ENCODE measurements at regions of chr3 and their contacts with region 1.

Region 1: DNA sequence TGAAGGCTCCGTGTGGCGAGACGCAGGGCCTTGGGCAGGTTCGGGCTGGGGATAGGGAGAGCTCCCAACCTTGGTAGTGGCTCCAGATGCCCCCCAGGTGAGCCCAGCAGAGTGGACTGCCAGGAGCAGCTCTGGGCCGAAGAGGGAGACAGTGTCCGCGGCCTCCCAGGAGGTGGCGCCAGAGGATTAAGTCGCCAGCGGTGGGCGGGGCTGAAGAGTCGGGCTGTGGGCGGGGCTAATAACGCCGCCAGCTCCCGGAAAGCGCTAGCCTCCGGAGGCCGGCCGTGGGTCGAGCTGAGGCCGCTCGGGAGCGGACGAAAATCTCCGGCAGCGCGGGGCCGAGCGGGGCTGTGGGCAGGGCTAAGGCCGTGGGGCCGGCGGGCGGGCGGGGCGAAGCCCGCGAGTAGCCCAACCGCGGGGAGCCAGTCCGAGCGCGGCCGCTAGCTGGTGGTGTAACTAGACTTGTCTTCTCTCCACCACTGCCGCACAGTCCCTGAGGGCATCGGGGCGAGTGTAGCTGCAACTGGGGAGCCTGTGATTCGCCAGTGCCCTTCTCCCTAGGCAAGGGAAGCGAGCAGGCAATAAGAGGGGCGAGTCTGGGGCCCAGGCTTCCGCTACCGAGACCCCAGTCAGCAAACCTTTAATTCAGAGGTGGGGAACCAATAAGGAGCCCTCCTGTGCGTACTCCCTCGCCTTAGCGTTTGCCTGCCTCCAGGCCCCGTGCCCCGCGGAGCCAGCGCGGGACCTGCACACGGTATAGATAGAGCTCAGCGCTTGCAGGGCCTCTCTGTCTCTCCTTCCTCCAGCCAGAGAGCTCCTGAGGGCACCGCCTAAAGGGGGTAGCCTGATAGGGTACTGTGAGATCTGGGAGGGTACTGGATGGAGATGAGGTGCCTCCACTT is 14.4 kb upstream of the BSN start:
- DNase-seq: peak; percentile 97
- ATAC-seq: peak; percentile 86
- H3K4me3 Mint-ChIP-seq: peak overlapping the region; percentile 72
- H3K27ac Mint-ChIP-seq: 0 out of 2 replicates have a peak overlapping the region, but pooled peaks have one; percentile 41
- H3K4me1 Mint-ChIP-seq: peaks cover 19% of the 10 kb centered on the region
- H3K27me3 Mint-ChIP-seq: peaks cover 23% of the 10 kb centered on the region
- CTCF ChIP-seq: peak; percentile 80

Region 2: GRCh38 chr3:49454458-49454857 is 85.5 kb before region 1 on chr3:
- CTCF ChIA-PET with region 1: interaction called, 62 read pairs
- POLR2A ChIA-PET with region 1: interaction called, 10 read pairs
- DNase-seq: peak; percentile 76
- ATAC-seq: peak; percentile 92
- H3K4me3 Mint-ChIP-seq: no peak overlapping the region
- H3K27ac Mint-ChIP-seq: no peak overlapping the region
- H3K4me1 Mint-ChIP-seq: peaks cover 25% of the 10 kb centered on the region
- H3K27me3 Mint-ChIP-seq: no peaks in the 10 kb centered on the region
- CTCF ChIP-seq: no peak

Region 3: DNA sequence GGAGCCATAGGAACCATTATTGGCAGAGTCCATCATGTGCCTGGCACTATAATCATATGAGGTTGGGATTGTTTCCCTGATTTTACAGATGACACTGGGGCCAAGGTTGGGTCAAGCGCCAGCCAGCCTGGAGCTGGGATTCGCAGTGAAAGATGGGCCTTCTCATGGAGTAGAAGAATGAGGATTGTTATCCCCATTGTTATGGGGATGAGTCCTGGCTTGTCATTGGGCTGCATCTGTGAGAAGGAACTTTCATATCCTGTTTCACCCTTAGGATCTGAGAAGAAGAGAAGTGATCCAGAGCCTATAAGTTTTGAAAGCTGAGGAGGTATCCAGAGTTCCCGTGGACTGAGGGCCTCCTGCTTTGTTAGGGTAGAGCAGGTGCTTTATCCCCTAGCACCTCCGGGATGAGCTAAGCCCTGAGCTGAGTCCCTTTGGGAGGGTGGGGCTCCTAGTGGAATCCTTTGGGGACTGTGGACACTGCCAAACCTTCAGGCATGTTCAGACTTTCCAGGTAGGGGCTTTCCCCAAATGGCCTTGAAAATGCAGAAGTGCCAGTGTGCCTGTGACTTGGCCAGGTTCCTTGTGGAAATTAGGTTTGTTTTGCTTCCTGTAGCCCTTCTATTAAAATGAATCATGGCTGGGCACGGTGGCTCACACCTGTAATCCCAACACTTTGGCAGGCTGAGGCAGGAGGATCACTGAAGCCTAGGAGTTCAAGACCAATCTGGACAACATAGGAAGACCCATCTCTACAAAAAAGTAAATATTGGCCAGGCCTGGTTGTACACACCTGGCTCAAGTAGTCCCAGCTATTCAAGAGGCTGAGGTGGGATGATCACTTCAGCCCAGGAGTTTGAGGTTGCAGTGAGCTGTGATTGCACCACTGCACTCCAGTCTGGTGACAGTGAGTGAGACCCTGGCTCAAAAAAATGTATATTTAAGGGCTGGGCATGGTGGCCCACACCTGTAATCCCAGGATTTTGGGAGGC is 15.9 kb before region 1 on chr3:
- CTCF ChIA-PET with region 1: interaction called, 14 read pairs
- POLR2A ChIA-PET with region 1: no interaction called
- DNase-seq: no peak
- ATAC-seq: no peak
- H3K4me3 Mint-ChIP-seq: no peak overlapping the region
- H3K27ac Mint-ChIP-seq: peak overlapping the region; percentile 85
- H3K4me1 Mint-ChIP-seq: 0 out of 2 replicates have a peak, but pooled peaks cover 6% of the 10 kb centered on the region
- H3K27me3 Mint-ChIP-seq: no peaks in the 10 kb centered on the region
- CTCF ChIP-seq: no peak

Region 4: GRCh38 chr3:49582177-49582576 is 42.3 kb after region 1 on chr3:
- CTCF ChIA-PET with region 1: interaction called, 10 read pairs
- POLR2A ChIA-PET with region 1: no interaction called
- DNase-seq: no peak
- ATAC-seq: no peak
- H3K4me3 Mint-ChIP-seq: no peak overlapping the region
- H3K27ac Mint-ChIP-seq: no peak overlapping the region
- H3K4me1 Mint-ChIP-seq: no peaks in the 10 kb centered on the region; the same call in 1 of the 2 replicates
- H3K27me3 Mint-ChIP-seq: no peaks in the 10 kb centered on the region
- CTCF ChIP-seq: no peak

Region 5: GRCh38 chr3:49673715-49674496 is 134.0 kb after region 1 on chr3 and contains the start of gene APEH:
- CTCF ChIA-PET with region 1: interaction called, 304 read pairs
- POLR2A ChIA-PET with region 1: interaction called, 27 read pairs
- DNase-seq: peak; percentile 98
- ATAC-seq: peak; percentile 85
- H3K4me3 Mint-ChIP-seq: peak within 1 kb of the TSS; percentile 81
- H3K27ac Mint-ChIP-seq: peak within 1 kb of the TSS; percentile 94
- H3K4me1 Mint-ChIP-seq: peaks cover 21% of the 10 kb centered on the region
- H3K27me3 Mint-ChIP-seq: no peaks in the 10 kb centered on the region
- CTCF ChIP-seq: no peak
- total RNA-seq, gene APEH: 270 to 276 TPM (median 273 TPM) in 3 replicates

Region 6: GRCh38 chr3:49802719-49803464 is 263.0 kb after region 1 on chr3 and contains the start of gene INKA1:
- CTCF ChIA-PET with region 1: interaction called, 11 read pairs
- POLR2A ChIA-PET with region 1: no interaction called
- DNase-seq: peak; percentile 92
- ATAC-seq: peak; percentile 79
- H3K4me3 Mint-ChIP-seq: peak within 1 kb of the TSS; percentile 86
- H3K27ac Mint-ChIP-seq: peak within 1 kb of the TSS; percentile 94
- H3K4me1 Mint-ChIP-seq: peaks cover 41% of the 10 kb centered on the region
- H3K27me3 Mint-ChIP-seq: peaks cover 40% of the 10 kb centered on the region
- CTCF ChIP-seq: peak; percentile 58
- total RNA-seq, gene INKA1: 1.4 to 2.0 TPM (median 1.5 TPM) in 3 replicates